ENCODE measurements at regions of chr5 and their contacts with region 1.

Region 1: DNA sequence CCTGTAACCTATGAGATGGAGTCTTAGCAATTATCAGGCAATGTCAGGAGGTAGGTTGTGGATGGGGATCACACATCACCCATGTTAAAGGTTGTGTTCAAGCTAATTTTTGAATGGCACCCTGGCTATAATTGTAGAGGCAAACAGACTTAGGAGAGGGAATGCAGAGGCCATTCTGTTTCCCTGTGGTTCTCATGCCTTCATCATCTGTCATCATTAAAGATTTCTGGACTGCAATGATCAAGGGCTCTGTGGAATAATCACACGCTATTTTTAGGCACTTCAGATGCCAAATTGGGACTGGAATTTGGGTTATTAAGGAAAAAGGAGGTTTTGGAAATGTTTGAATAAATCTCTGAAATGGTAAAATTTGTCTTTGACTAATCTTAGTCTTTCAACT is 1065.4 kb downstream of the TAF11L14 start:
- DNase-seq: no peak
- H3K4me3 ChIP-seq: no peak overlapping the region
- H3K4me3 Mint-ChIP-seq: no peak overlapping the region
- H3K27ac ChIP-seq: no peak overlapping the region
- H3K27ac Mint-ChIP-seq: peak overlapping the region in 1 of 7 donors; percentile 32
- H3K4me1 ChIP-seq: peaks cover 6% of the 10 kb centered on the region
- H3K4me1 Mint-ChIP-seq: peaks cover 8 to 12% (median 8%) of the 10 kb centered on the region in 4 donors
- H3K27me3 ChIP-seq: no peaks in the 10 kb centered on the region
- H3K27me3 Mint-ChIP-seq: no peaks in the 10 kb centered on the region

Region 2: GRCh38 chr5:17216176-17216973 is 1483.3 kb before region 1 on chr5:
- CTCF ChIA-PET with region 1: no interaction called
- POLR2A ChIA-PET with region 1: no interaction called
- intact Hi-C with region 1: loop called (anchors 5 kb)
- DNase-seq: peak in 4 of 5 donors; percentile 15 to 34 (median 23)
- H3K4me3 ChIP-seq: no peak overlapping the region
- H3K4me3 Mint-ChIP-seq: peak overlapping the region; percentile 59 to 84 (median 68)
- H3K27ac ChIP-seq: no peak overlapping the region
- H3K27ac Mint-ChIP-seq: peak overlapping the region in 1 of 7 donors; percentile 31
- H3K4me1 ChIP-seq: no peaks in the 10 kb centered on the region
- H3K4me1 Mint-ChIP-seq: peaks cover 6 to 13% (median 10%) of the 10 kb centered on the region in 4 donors
- H3K27me3 ChIP-seq: no peaks in the 10 kb centered on the region
- H3K27me3 Mint-ChIP-seq: peaks cover 19 to 25% of the 10 kb centered on the region in 2 donors

Region 3: GRCh38 chr5:17340816-17341215 is 1358.9 kb before region 1 on chr5:
- CTCF ChIA-PET with region 1: no interaction called
- POLR2A ChIA-PET with region 1: no interaction called
- intact Hi-C with region 1: no loop called
- DNase-seq: no peak
- H3K4me3 ChIP-seq: no peak overlapping the region
- H3K4me3 Mint-ChIP-seq: no peak overlapping the region
- H3K27ac ChIP-seq: no peak overlapping the region
- H3K27ac Mint-ChIP-seq: no peak overlapping the region
- H3K4me1 ChIP-seq: no peaks in the 10 kb centered on the region
- H3K4me1 Mint-ChIP-seq: no peaks in the 10 kb centered on the region
- H3K27me3 ChIP-seq: no peaks in the 10 kb centered on the region
- H3K27me3 Mint-ChIP-seq: no peaks in the 10 kb centered on the region

Region 4: DNA sequence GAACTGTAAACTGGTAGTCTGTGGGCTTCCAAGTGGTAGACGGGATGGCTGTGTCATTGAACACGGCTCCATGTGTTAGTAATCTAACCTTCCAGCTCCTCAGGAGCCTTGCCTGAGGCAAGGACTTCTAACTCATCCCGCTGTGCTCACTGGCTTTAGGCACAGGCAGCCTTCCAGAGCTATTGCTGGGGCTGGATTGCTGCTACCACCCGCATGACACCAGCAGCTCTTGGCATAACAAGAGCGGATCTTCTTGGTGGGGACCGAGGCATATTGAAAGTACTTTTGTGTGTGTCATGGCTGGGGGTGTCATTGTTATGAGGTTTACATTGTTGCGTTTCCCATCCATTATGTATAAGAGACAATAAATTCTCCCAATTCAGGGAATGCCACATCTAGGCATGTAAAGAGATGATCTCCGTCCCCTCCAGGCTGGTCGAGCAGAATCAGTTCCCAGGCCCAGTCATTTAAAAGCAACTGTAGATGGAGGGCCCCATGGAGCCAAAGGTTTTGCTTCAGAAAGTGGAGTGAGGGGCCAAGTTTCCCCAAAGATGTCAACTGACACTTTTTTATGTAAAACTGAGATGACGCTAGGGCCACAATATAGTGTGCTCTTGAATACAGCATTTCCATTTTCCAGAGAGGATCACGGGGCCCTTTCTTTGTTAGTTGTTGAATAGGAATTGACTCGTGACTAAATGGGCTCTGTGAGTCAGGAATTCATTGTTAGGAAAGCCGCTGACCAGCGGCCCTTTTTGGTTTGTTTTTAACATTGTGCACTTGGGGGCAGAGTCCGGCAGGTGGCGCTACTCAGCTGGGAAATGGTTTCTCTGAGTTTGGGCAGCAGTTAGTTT is 305.9 kb before region 1 on chr5:
- CTCF ChIA-PET with region 1: no interaction called
- POLR2A ChIA-PET with region 1: no interaction called
- intact Hi-C with region 1: loop called (anchors 1 kb)
- DNase-seq: peak in 4 of 5 donors; percentile 1 to 27 (median 10)
- H3K4me3 ChIP-seq: no peak overlapping the region
- H3K4me3 Mint-ChIP-seq: no peak overlapping the region
- H3K27ac ChIP-seq: no peak overlapping the region
- H3K27ac Mint-ChIP-seq: no peak overlapping the region
- H3K4me1 ChIP-seq: no peaks in the 10 kb centered on the region
- H3K4me1 Mint-ChIP-seq: no peaks in the 10 kb centered on the region
- H3K27me3 ChIP-seq: no peaks in the 10 kb centered on the region
- H3K27me3 Mint-ChIP-seq: no peaks in the 10 kb centered on the region

Region 5: GRCh38 chr5:18517641-18518380 is 181.9 kb before region 1 on chr5:
- CTCF ChIA-PET with region 1: no interaction called
- POLR2A ChIA-PET with region 1: no interaction called
- intact Hi-C with region 1: no loop called
- DNase-seq: no peak
- H3K4me3 ChIP-seq: no peak overlapping the region
- H3K4me3 Mint-ChIP-seq: no peak overlapping the region
- H3K27ac ChIP-seq: no peak overlapping the region
- H3K27ac Mint-ChIP-seq: no peak overlapping the region
- H3K4me1 ChIP-seq: no peaks in the 10 kb centered on the region
- H3K4me1 Mint-ChIP-seq: no peaks in the 10 kb centered on the region
- H3K27me3 ChIP-seq: no peaks in the 10 kb centered on the region
- H3K27me3 Mint-ChIP-seq: no peaks in the 10 kb centered on the region

Region 6: GRCh38 chr5:18686253-18686652 is 13.4 kb before region 1 on chr5:
- CTCF ChIA-PET with region 1: interaction called, 12 read pairs
- POLR2A ChIA-PET with region 1: no interaction called
- intact Hi-C with region 1: no loop called
- DNase-seq: no peak
- H3K4me3 ChIP-seq: no peak overlapping the region
- H3K4me3 Mint-ChIP-seq: no peak overlapping the region
- H3K27ac ChIP-seq: no peak overlapping the region
- H3K27ac Mint-ChIP-seq: no peak overlapping the region
- H3K4me1 ChIP-seq: no peaks in the 10 kb centered on the region
- H3K4me1 Mint-ChIP-seq: no peaks in the 10 kb centered on the region
- H3K27me3 ChIP-seq: no peaks in the 10 kb centered on the region
- H3K27me3 Mint-ChIP-seq: no peaks in the 10 kb centered on the region

Region 7: GRCh38 chr5:18712936-18713485 is 13.3 kb after region 1 on chr5:
- CTCF ChIA-PET with region 1: interaction called, 24 read pairs
- POLR2A ChIA-PET with region 1: no interaction called
- intact Hi-C with region 1: no loop called
- DNase-seq: no peak
- H3K4me3 ChIP-seq: no peak overlapping the region
- H3K4me3 Mint-ChIP-seq: no peak overlapping the region
- H3K27ac ChIP-seq: no peak overlapping the region
- H3K27ac Mint-ChIP-seq: no peak overlapping the region
- H3K4me1 ChIP-seq: no peaks in the 10 kb centered on the region
- H3K4me1 Mint-ChIP-seq: peaks cover 0 to 3% (median 0%) of the 10 kb centered on the region in 4 donors
- H3K27me3 ChIP-seq: no peaks in the 10 kb centered on the region
- H3K27me3 Mint-ChIP-seq: no peaks in the 10 kb centered on the region

Measured in CD4-positive, alpha-beta memory T cell (primary cell).